Gastrocnemius medialis (tissue), 4 donors: ENCODE measurements at regions of chr2 and their contacts with region 1.

Region 1: GRCh38 chr2:226427538-226428307 is 371.9 kb downstream of the IRS1 start:
- DNase-seq: peak; percentile 49 to 57
- ATAC-seq: peak; percentile 100
- H3K4me3 ChIP-seq: no peak overlapping the region
- H3K27ac ChIP-seq: peak overlapping the region; percentile 71 to 80 (median 74)
- H3K4me1 ChIP-seq: peaks cover 13 to 25% of the 10 kb centered on the region in 2 donors
- H3K27me3 ChIP-seq: no peaks in the 10 kb centered on the region
- CTCF ChIP-seq: no peak
- POLR2A ChIP-seq: no peak

Region 2: GRCh38 chr2:226325526-226325925 is 102.2 kb before region 1 on chr2:
- in situ Hi-C with region 1: no loop called
- intact Hi-C with region 1: loop called (anchors 5 kb)
- DNase-seq: no peak
- ATAC-seq: no peak
- H3K4me3 ChIP-seq: no peak overlapping the region
- H3K27ac ChIP-seq: no peak overlapping the region
- H3K4me1 ChIP-seq: peaks cover 15 to 22% of the 10 kb centered on the region in 2 donors
- H3K27me3 ChIP-seq: no peaks in the 10 kb centered on the region
- CTCF ChIP-seq: no peak
- POLR2A ChIP-seq: no peak

Region 3: DNA sequence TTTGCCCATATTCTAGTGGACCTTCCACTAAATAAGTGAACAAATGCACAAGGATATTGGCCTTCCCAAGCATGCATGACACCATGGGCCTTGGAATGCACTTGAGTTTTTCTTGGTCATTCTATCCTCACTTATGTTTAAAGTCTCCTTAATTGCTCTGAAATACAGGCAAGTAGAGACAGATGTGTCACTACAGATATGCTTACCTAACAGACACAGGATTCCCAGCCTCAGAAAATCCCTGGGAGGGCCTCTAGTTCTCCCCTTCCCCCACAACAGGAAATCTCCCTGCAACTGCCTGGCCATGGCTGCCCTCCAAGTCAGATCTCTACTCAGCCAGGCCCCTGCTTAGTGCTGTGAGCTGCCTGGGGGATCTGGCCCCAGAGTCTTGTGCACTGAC is 73.3 kb before region 1 on chr2:
- in situ Hi-C with region 1: no loop called
- intact Hi-C with region 1: no loop called
- DNase-seq: peak in 1 of 2 donors; percentile 12
- ATAC-seq: no peak
- H3K4me3 ChIP-seq: no peak overlapping the region
- H3K27ac ChIP-seq: peak overlapping the region; percentile 67 to 84 (median 72)
- H3K4me1 ChIP-seq: peaks cover 30 to 33% of the 10 kb centered on the region in 2 donors
- H3K27me3 ChIP-seq: no peaks in the 10 kb centered on the region
- CTCF ChIP-seq: no peak
- POLR2A ChIP-seq: no peak

Region 4: DNA sequence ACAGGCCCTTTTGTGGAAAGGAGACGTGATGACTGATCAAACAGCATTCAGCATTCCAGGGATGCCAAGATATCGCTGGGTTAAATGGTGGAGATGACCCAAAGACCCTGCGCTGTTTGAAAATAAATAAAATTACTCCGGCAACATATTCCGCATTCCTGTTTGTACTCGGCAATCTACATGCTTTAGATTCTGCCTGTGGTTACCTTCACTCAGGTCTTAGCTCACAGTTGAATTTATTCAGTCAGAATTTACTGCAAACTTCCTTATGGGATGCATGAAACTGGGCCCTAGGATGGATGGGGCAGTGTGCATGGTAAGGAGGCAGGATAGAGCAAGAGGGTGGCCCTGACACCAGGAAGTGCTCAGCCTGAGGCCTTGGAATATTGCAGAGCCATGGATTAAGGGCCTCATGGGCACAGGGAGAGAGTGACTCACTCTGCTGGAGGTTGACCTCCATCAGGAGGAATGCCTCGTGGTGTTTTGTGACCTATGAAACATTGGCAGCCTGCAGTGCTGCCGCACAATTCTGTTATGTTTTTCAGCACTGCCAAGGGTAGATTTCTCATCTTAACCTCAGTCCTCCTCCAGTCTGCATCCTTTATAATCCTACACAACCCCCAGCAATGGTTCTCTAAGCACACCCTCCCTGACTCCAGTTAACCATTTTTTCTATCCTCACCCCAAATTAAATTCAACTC is 50.5 kb after region 1 on chr2:
- in situ Hi-C with region 1: no loop called
- intact Hi-C with region 1: loop called (anchors 5 kb)
- DNase-seq: peak; percentile 71 to 77
- ATAC-seq: peak; percentile 97 to 100
- H3K4me3 ChIP-seq: no peak overlapping the region
- H3K27ac ChIP-seq: peak overlapping the region; percentile 61 to 78 (median 66)
- H3K4me1 ChIP-seq: peaks cover 16 to 20% of the 10 kb centered on the region in 2 donors
- H3K27me3 ChIP-seq: no peaks in the 10 kb centered on the region
- CTCF ChIP-seq: no peak
- POLR2A ChIP-seq: no peak